Motor neuron (in vitro differentiated cells): ENCODE measurements at regions of chr5 and their contacts with region 1.

Region 1: GRCh38 chr5:74919487-74919886 is 53.3 kb upstream of the FAM169A start:
- ATAC-seq: peak in 5 of 8 experiments; percentile 41 to 78 (median 70)
- H3K4me3 ChIP-seq: no peak overlapping the region
- H3K27ac ChIP-seq: no peak overlapping the region
- H3K4me1 ChIP-seq: no peaks in the 10 kb centered on the region

Region 2: DNA sequence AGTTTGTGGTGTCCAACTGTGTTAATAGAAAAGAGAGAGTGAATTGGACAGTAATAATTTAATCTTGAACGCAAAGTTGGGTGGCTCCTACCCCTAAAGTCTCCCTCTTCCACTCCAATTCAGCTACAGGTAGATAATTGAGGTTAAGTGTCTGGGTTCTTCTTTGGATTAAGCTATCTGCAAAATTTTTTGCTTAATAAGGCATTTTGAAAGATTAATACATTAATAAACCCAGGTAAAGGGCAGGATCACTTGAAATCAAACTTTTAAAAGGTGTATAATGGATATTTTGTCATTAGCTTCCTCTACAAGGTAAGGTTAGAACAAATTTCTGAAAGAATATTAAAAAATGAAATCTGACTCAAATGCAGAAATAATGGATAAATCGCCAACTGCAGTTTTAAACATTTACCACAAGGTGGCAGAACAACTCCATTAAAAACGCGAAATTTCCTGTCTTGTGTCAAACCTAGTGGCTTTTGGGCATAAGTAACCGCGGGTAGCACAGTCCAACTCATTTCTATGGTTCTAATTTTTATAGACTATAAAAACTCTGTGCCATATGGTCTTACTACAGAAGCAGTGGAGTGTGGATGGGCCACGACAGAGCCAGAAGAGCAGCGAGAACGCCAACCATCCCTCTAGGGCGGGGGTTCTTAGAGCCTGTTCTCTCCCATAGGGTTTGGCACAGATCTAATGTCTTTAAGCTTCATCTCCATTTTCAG is 1017.0 kb before region 1 on chr5:
- in situ Hi-C with region 1: loop called in 1 of 9 experiments (anchors 25 kb)
- ATAC-seq: peak in 5 of 8 experiments; percentile 23 to 55 (median 30)
- H3K4me3 ChIP-seq: no peak overlapping the region
- H3K27ac ChIP-seq: no peak overlapping the region
- H3K4me1 ChIP-seq: no peaks in the 10 kb centered on the region

Region 3: DNA sequence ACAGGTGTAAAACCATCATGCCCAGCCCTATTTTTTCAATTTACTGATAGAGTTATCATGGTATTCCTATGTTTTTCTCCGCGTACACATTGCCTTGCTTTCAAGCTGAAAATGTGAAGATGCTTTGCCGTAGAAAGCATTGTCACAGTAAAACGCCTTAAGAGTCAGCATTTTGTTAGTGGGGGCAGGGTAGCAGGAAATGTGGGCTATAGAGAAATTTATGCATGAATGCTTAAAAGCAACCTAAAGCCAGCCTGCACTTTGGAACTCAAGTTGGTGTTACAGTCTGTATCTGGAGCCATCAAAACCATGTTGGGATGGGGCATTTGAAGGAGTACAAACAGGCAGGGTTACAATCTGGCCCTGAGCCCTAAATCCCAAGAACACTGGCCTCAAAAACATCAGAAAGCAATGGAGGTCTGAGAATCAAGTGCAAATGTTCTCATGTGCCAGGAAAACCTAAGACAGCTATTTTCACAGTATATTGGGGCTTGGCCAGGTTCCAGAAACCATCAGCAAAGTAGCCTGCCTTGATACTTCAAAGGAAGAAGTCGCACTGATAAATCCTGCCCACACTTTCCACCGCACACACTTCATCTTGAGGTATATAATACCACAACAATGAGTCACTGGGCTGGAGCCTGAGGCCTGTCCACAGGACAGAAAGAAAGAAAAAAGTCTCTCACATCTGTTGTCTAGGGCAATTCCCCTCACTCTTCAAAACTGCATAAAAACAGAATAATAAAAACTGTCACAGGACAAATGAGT is 592.7 kb before region 1 on chr5:
- in situ Hi-C with region 1: no loop called
- ATAC-seq: peak in 6 of 8 experiments; percentile 53 to 93 (median 68)
- H3K4me3 ChIP-seq: no peak overlapping the region
- H3K27ac ChIP-seq: no peak overlapping the region
- H3K4me1 ChIP-seq: peaks cover 23 to 26% of the 10 kb centered on the region in 2 donors

Region 4: GRCh38 chr5:74673011-74673790 is 246.3 kb before region 1 on chr5:
- in situ Hi-C with region 1: loop called in 3 of 9 experiments (anchors 10 to 25 kb)
- ATAC-seq: peak in 3 of 8 experiments; percentile 68 to 78 (median 71)
- H3K4me3 ChIP-seq: no peak overlapping the region
- H3K27ac ChIP-seq: no peak overlapping the region
- H3K4me1 ChIP-seq: peaks cover 13 to 23% of the 10 kb centered on the region in 2 donors

Region 5: GRCh38 chr5:74766849-74767578 is 152.5 kb before region 1 on chr5 and contains the starts of genes GFM2 and NSA2:
- in situ Hi-C with region 1: loop called in 1 of 9 experiments (anchors 25 kb)
- ATAC-seq: peak; percentile 94 to 99 (median 98)
- H3K4me3 ChIP-seq: peak within 1 kb of the TSS; percentile 65 to 100 (median 98)
- H3K27ac ChIP-seq: peak within 1 kb of the TSS; percentile 64 to 93
- H3K4me1 ChIP-seq: peaks cover 17 to 19% of the 10 kb centered on the region in 2 donors
- total RNA-seq, gene GFM2: 29.4 to 58.9 (median 39.3) TPM
- total RNA-seq, gene NSA2: 90.6 to 166 (median 114) TPM

Region 6: GRCh38 chr5:74798977-74799911 is 120.2 kb before region 1 on chr5:
- in situ Hi-C with region 1: loop called in 1 of 9 experiments (anchors 25 kb)
- ATAC-seq: no peak
- H3K4me3 ChIP-seq: no peak overlapping the region
- H3K27ac ChIP-seq: no peak overlapping the region
- H3K4me1 ChIP-seq: no peaks in the 10 kb centered on the region